ENCODE measurements at regions of chr15 and their contacts with region 1.

Region 1: DNA sequence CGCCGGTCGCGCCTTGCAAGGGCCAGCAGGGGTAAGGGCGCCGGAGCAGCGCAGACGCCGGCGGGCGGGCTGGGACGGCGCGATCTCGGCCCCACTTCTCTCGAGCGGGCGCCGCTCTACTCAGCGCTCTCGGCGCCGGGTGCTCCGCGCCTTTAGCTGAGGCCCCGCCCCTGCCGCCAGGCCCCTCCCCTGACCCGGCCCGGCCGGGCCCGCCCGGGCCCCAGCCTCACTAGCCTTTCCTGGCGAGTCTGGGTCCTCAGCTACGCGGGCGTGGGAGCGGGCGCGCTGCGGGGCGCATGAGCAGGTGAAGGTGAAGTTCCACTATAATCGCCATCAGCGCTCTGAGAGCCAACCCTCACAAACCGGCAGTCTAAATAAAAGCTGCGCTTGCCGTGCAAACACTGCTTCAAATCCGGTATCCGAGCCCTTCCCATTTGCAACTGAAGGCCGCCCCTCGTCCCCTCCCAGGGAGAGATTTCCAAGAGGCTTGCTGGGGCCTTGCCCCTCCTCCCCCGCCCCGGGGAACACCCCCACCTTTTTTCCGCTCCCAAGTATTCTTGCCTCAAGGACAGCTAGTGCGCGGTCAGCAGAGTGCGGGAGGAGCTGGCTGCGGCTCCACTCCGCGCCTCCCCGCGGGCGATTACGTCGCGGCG is at the start of gene RPP25:
- DNase-seq: peak; percentile 65
- H3K4me3 Mint-ChIP-seq: peak within 1 kb of the TSS; percentile 69
- H3K27ac Mint-ChIP-seq: no peak within 1 kb of the TSS
- H3K4me1 Mint-ChIP-seq: peaks cover 44% of the 10 kb centered on the region
- H3K27me3 Mint-ChIP-seq: peaks cover 28% of the 10 kb centered on the region
- total RNA-seq, gene RPP25: 3.5 to 3.7 TPM

Region 2: GRCh38 chr15:74988007-74988800 is 31.4 kb after region 1 on chr15:
- CTCF ChIA-PET with region 1: interaction called, 4 read pairs
- intact Hi-C with region 1: loop called (anchors 1 kb)
- DNase-seq: peak; percentile 73
- H3K4me3 Mint-ChIP-seq: no peak overlapping the region
- H3K27ac Mint-ChIP-seq: no peak overlapping the region
- H3K4me1 Mint-ChIP-seq: peaks cover 11% of the 10 kb centered on the region
- H3K27me3 Mint-ChIP-seq: peaks cover 6% of the 10 kb centered on the region

Region 3: GRCh38 chr15:74995241-74995778 is 38.5 kb after region 1 on chr15 and contains the start of gene SCAMP5:
- CTCF ChIA-PET with region 1: no interaction called
- intact Hi-C with region 1: loop called (anchors 1 kb)
- DNase-seq: peak; percentile 95
- H3K4me3 Mint-ChIP-seq: peak within 1 kb of the TSS; percentile 65
- H3K27ac Mint-ChIP-seq: no peak within 1 kb of the TSS
- H3K4me1 Mint-ChIP-seq: peaks cover 15% of the 10 kb centered on the region
- H3K27me3 Mint-ChIP-seq: peaks cover 33% of the 10 kb centered on the region
- total RNA-seq, gene SCAMP5: 0.15 to 0.38 TPM

Region 4: DNA sequence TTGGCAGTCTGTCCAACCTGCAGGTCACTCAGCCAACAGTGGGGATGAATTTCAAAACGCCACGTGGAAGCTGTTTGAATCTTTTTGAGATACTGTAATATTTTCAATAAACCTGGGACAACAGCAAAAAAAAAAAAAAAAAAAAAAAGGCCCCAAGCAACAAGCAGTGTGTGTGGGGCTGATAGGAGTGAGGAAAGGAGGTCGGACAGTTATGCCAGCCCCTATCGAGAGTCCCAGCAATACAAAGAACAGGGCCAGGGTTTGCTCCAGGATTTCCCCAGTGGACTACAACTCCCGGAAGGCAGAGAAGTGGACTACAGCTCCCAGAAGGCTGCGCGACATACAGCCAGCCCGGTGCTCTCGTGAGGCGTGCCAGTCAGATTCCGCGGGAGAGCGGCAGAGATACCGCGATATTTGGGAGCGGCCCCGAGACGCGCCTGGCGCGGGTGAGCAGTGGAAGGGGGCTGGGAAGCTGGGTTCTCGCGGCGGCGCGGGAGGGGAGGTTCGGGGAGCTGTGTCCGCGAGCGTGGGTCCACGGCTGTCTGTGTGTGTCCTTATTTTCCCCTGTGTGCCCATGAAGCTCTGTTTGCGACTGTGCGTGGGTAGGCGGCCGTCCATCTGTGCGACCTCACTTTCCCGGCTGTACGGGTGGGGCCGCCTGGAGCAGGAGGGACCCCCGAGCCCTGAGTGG is 66.6 kb after region 1 on chr15 and contains the start of gene PPCDC:
- CTCF ChIA-PET with region 1: no interaction called
- intact Hi-C with region 1: loop called (anchors 1 kb)
- DNase-seq: peak; percentile 98
- H3K4me3 Mint-ChIP-seq: peak within 1 kb of the TSS; percentile 90
- H3K27ac Mint-ChIP-seq: peak within 1 kb of the TSS; percentile 90
- H3K4me1 Mint-ChIP-seq: peaks cover 16% of the 10 kb centered on the region
- H3K27me3 Mint-ChIP-seq: no peaks in the 10 kb centered on the region
- total RNA-seq, gene PPCDC: 17.5 to 18.0 TPM

Measured in activated naive CD4-positive, alpha-beta T cell treated with anti-CD3 and anti-CD28 coated beads for 36 hours (primary cell).